ENCODE measurements at regions of chr7 and their contacts with region 1.

Region 1: DNA sequence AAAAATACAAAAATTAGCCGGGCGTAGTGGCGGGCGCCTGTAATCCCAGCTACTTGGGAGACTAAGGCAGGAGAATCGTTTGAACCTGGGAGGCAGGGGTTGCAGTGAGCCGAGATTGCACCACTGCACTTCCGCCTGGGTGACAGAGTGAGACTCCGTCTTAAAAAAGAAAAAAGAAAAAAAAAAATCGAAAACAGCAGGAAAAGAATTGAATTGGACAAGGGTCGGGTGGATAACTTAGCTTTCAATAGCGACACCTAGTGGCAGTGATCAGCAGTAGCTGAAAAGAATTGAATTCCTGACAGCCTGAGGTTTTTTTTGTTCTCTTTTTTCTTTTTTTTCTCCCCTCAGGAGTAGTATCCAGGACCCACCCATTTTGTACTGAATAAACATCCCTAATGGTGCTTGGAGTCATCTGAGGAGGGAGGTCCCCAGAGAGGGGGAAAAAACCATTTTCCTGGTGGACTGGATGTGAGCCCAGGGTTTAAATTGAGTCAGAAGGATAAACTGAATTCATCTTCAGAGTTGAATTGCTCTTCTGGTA is 55.1 kb downstream of the CYCS start:
- DNase-seq: no peak
- H3K4me3 ChIP-seq: no peak overlapping the region
- CTCF ChIP-seq: peak; percentile 63

Region 2: DNA sequence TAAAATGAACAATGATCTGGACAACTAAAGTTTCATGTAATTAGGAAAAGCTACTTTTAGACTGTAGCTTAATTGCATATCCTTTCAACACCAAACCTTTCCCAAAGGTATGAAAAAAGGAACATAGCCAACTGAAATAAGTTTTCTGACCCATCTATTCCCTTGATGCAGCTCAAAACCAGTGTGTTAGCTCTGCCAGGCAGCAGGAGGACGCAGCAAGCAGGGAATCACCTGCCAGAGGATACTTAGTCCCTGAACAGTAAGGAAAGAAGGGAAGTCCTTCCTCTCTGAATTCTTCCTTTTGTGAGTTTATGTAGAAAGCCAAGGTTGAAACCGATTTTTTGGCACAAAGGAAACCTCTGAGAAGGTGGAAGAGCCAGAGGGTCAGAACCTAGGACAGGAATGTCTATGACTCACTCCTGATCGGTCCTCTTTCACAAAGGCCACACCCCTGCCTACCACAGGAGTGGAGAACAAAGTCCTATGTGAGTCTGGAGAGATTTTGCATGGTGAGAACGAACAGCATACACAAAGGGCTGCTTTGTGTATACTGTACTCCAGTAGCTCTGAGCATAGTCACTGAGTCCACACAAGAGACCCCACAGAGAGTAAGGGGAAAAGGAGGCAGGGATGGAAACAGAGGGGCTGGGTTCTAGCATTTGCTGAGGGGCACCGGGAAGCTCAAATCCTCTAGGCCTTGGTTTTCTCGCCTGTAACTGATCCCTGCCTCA is 243.9 kb before region 1 on chr7:
- CTCF ChIA-PET with region 1: interaction called, 56 read pairs
- POLR2A ChIA-PET with region 1: interaction called, 9 read pairs
- DNase-seq: no peak
- H3K4me3 ChIP-seq: no peak overlapping the region
- CTCF ChIP-seq: no peak

Region 3: GRCh38 chr7:24979863-24980533 is 90.0 kb before region 1 on chr7 and contains the start of gene OSBPL3:
- CTCF ChIA-PET with region 1: interaction called, 32 read pairs
- POLR2A ChIA-PET with region 1: interaction called, 3 read pairs
- DNase-seq: peak; percentile 66
- H3K4me3 ChIP-seq: peak within 1 kb of the TSS; percentile 76
- CTCF ChIP-seq: no peak

Region 4: DNA sequence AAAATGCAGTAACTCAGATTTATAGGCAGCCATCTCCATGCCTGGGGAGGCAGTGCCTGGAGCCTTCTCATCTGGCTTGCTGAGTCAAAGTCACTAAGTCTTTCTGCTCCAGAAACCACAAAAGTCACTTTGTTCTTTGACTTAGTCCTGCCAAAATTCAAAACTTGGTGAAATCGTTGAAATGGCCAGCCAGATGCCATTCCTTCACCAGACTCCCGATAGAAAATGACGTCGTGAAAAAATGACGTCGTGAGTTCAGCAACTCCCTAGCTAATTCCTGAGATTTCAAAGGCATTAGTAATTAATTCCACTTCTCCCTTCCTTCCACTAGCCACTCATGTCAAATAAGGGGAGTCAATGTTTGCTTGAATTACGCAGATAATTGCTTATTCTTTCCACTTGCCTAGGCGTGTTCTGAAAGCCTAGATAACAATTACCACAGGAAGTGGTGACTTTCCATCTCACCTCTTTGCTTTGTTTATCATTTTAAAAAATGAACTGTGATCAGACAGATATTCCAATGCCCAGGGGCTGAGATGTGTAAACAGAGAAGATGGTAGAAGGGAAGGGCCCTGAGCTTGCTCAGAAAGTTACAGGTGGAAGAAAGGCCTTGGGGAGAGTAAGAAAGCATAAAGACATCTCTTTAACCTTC is 41.5 kb before region 1 on chr7:
- CTCF ChIA-PET with region 1: interaction called, 19 read pairs
- POLR2A ChIA-PET with region 1: no interaction called
- DNase-seq: peak; percentile 49
- H3K4me3 ChIP-seq: no peak overlapping the region
- CTCF ChIP-seq: no peak

Region 5: GRCh38 chr7:25054819-25055519 is 15.0 kb before region 1 on chr7:
- CTCF ChIA-PET with region 1: interaction called, 13 read pairs
- POLR2A ChIA-PET with region 1: no interaction called
- DNase-seq: no peak
- H3K4me3 ChIP-seq: no peak overlapping the region
- CTCF ChIP-seq: no peak

Region 6: GRCh38 chr7:25520017-25520416 is 450.0 kb after region 1 on chr7:
- CTCF ChIA-PET with region 1: no interaction called
- POLR2A ChIA-PET with region 1: no interaction called
- DNase-seq: no peak
- H3K4me3 ChIP-seq: no peak overlapping the region
- CTCF ChIP-seq: no peak

Measured in AG04449 (cell line).